Gastrocnemius medialis (tissue), 4 donors: ENCODE measurements at regions of chr9 and their contacts with region 1.

Region 1: GRCh38 chr9:136410500-136411287 is at the starts of genes ENTR1 and PMPCA:
- DNase-seq: peak; percentile 87
- ATAC-seq: peak; percentile 94 to 96
- H3K4me3 ChIP-seq: peak within 1 kb of the TSS; percentile 76 to 97 (median 82)
- H3K27ac ChIP-seq: peak within 1 kb of the TSS; percentile 81 to 93 (median 90)
- H3K4me1 ChIP-seq: peaks cover 16 to 25% of the 10 kb centered on the region in 2 donors
- H3K27me3 ChIP-seq: no peaks in the 10 kb centered on the region
- CTCF ChIP-seq: no peak
- POLR2A ChIP-seq: peak; percentile 83 to 94
- total RNA-seq, gene ENTR1: 23.2 to 43.5 (median 36.5) TPM
- total RNA-seq, gene PMPCA: 35.9 to 63.1 (median 42.7) TPM

Region 2: GRCh38 chr9:136400038-136400834 is 10.5 kb before region 1 on chr9 and contains the start of gene SNAPC4:
- in situ Hi-C with region 1: no loop called
- intact Hi-C with region 1: loop called (anchors 1 kb)
- DNase-seq: peak; percentile 52 to 75
- ATAC-seq: peak; percentile 90 to 93
- H3K4me3 ChIP-seq: peak within 1 kb of the TSS; percentile 75 to 96 (median 94)
- H3K27ac ChIP-seq: peak within 1 kb of the TSS; percentile 54 to 78 (median 73)
- H3K4me1 ChIP-seq: peaks cover 14 to 18% of the 10 kb centered on the region in 2 donors
- H3K27me3 ChIP-seq: no peaks in the 10 kb centered on the region
- CTCF ChIP-seq: peak; percentile 84 to 98 (median 91)
- POLR2A ChIP-seq: peak; percentile 60 to 64
- total RNA-seq, gene SNAPC4: 2.3 to 6.0 (median 3.9) TPM

Region 3: DNA sequence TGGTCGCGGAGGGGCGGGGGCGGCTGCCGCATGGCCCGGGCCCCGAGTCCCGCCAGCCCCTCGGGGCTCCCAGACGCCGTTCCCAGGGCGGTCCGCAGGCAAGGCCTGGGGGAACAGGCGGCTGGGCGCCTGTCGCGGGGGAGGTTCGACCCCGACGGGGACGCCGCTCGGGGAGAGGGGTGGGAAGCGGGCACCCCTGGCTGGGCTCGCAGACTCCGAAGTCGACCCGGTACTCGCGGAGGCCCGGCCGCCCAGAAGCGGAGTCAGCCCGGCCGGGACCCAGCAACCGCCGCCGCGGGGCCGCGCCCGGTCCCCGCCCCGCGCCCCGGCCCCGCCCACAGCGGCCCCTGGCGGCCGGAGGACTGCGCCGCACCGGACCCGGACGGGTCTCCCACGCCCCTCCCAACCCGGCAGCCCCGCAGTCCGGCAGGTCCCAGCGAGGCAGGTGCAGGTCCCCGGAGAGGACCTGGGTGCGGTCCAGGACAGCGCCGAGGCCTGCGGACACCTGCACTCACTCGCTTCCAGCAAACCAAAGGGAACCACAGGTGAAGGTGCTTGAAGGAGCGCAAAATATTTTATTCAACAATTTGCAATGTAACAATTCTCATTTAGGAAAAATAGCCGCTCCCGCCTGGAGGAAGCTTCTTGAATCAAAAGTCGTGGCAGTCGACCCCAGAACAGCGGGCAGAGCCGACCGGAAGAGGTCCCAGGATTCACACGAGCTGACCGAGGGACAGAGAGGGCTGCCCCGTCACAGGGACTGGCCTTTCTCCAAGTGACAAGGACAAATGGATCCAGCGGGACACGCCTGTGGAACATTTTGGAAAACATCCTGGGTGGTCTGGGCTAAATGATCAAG is 29.1 kb after region 1 on chr9 and contains the start of gene INPP5E:
- in situ Hi-C with region 1: no loop called
- intact Hi-C with region 1: loop called (anchors 2 kb)
- DNase-seq: peak; percentile 23 to 58
- ATAC-seq: peak; percentile 86 to 87
- H3K4me3 ChIP-seq: peak within 1 kb of the TSS; percentile 58 to 86 (median 68)
- H3K27ac ChIP-seq: peak within 1 kb of the TSS; percentile 59 to 88 (median 76)
- H3K4me1 ChIP-seq: peaks cover 27 to 30% of the 10 kb centered on the region in 2 donors
- H3K27me3 ChIP-seq: no peaks in the 10 kb centered on the region
- CTCF ChIP-seq: peak; percentile 66 to 97 (median 74)
- POLR2A ChIP-seq: peak in 1 of 2 donors; percentile 25
- total RNA-seq, gene INPP5E: 5.0 to 6.7 (median 5.9) TPM